Sciatic nerve (tissue), 2 donors: ENCODE measurements at regions of chr7 and their contacts with region 1.

Region 1: GRCh38 chr7:141014524-141015395 is at the start of gene MRPS33:
- DNase-seq: peak; percentile 95
- ATAC-seq: peak; percentile 100
- total RNA-seq, gene MRPS33: 23.2 TPM

Region 2: GRCh38 chr7:140810830-140811556 is 203.8 kb before region 1 on chr7:
- intact Hi-C with region 1: loop called (anchors 10 kb)
- DNase-seq: no peak
- ATAC-seq: peak; percentile 86

Region 3: GRCh38 chr7:141001122-141001521 is 13.6 kb before region 1 on chr7:
- intact Hi-C with region 1: no loop called
- DNase-seq: no peak
- ATAC-seq: no peak

Region 4: DNA sequence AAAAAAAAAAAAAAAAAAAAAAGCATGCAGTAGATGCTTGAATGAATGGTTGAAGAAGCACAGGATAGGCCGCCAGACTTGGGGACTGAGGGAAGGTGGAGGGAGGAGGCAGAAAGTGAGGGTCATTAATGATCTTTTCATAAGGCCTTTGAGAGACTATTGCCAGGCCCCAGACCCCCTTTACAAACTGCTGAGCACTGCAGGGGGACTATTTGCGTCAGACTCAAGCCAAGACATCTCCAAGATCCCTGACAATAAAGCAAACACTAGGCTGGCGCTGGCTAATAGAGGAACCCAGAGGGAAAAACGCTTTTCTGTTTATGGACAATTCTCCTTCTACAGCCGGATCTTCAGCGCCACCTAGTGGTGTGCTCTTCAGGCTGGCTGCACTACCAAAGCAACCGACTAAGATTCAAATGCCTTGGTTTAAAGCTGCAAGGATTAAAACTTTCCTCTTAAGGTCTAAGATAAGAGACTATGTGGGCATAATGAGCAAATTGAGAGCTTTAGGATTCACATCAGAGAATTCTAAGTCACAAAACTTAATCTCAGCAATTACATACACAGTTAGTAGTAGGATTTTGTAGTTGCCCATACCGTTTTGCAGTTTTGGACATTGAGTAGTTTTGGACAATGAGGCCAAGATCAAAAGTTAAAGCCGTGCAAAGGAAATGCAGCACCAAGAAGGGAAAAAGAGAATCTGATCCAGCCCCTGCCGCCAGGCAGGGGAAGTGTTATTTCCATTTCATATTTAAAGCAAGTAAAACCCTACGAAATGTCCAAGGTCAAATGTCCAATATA is 518.6 kb after region 1 on chr7:
- intact Hi-C with region 1: loop called (anchors 10 kb)
- DNase-seq: peak; percentile 80
- ATAC-seq: peak; percentile 88

Region 5: DNA sequence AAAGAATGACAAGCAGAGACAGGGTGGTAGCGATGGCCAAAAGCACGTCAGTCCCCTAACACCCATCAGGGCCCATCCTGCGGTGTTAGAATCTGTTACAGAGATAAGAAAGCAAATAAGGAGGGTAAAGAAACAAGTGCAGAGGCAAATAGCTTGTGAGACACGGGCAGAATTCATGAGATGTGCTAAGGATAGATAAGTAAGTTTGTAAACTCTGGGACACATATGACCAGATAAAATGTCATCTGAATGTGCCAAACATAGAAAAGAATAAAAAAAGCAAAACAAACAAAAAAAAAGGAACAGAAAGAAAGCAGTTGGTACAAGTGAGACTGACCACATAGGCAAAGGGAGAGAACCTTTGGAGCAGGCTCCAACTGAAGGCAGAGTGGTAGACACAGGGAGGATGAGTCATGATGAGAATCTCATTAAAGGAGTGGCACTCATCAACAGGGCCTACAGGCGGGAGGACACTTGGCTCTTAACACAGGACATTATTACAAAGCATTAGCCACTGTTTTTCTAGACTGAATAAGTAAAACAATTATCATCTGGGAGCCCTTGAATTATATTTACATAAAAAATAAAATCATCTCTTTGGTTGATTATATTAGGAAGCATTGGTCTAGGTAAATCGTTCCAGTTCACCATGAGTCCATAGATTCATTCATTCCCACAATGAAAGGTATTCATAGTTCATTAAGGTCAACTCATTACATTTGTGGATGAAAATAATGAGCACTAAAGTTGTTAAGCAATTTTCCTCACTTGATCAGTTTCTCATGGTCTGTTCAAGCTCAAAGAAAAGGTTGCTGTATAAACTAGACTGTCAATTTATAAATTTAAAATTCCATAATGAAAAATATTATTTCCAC is 1818.7 kb after region 1 on chr7:
- intact Hi-C with region 1: no loop called
- DNase-seq: no peak
- ATAC-seq: no peak